ENCODE measurements at regions of chr12 and their contacts with region 1.

Region 1: GRCh38 chr12:45728630-45729232 is 775 bp upstream of the ARID2 start:
- DNase-seq: peak; percentile 98

Region 2: DNA sequence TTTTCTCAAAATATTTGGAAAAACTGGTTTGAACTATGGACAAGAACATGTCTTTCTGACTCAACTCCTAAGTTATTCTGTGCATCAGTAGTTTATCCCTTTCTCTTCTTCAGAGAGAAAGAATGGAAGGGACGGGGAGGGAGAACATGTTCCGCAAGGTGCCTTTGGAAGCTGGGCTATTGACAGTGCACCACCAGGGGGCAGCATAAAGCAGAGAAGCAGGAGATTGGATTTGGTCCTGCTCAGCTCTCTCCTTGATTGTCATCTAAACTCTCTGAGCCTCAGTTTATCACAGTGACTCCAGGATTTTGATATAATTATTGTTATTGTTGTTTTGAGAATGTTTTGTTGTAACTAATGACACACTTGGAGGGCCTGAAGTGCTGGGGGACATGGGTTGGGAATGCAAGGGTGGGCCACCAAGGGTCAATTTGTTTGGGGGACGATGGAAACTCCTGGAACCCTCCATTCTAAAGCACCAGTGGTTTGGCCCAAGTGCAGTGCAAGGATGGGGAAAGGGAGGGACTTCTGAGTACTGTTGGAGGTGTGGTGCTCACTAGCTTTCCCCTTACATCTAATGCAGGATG is 558.2 kb before region 1 on chr12:
- intact Hi-C with region 1: loop called (anchors 10 kb)
- DNase-seq: peak; percentile 79

Region 3: GRCh38 chr12:45215419-45216229 is 513.1 kb before region 1 on chr12 and contains the start of gene ANO6:
- intact Hi-C with region 1: loop called (anchors 5 kb)
- DNase-seq: peak; percentile 96
- total RNA-seq, gene ANO6: 49.0 TPM

Region 4: GRCh38 chr12:45409966-45410365 is 318.8 kb before region 1 on chr12:
- intact Hi-C with region 1: loop called (anchors 10 kb)
- DNase-seq: no peak

Region 5: GRCh38 chr12:45543906-45544315 is 184.8 kb before region 1 on chr12:
- intact Hi-C with region 1: loop called (anchors 10 kb)
- DNase-seq: no peak

Region 6: DNA sequence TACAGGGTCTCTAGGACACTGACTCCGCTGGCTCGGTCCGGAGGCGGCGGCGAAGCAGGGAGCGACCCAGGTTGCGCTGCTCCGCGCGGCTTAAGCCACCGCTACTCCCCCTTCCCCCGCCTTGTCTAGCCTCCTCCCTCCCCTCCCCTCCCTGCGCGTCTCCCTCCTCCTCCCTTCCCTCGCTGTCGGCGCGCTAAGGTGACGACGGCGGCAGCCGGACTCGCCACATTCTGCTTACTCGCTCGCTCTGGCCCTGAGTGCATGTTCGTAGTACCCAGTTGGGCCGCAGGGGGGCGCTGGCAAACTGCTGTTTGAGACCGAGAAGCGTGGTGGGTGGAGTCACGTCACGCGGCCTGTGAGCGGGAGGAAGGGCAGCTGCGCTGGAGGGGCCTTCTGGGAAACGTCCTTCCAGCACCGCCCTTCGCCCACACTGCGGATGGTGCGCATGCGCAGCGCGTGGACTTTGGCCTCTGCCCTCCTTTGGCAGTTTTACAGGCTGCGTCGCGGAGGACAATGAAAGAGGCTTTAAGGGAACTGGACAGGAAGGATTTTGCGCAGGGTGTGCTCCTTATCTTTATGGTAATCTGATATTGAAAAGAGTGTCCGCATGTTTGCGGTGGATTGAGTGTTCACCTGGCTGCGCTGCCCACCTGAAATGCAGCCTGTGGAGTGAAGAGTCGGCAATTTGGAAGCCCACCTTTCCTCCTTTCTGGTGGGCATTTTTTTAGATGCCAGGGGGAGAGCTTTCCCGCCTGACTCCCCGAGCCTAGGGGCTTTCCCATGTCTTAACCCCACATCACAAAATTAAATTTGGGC is 261.9 kb after region 1 on chr12 and contains the start of gene SCAF11:
- intact Hi-C with region 1: loop called (anchors 2 kb)
- DNase-seq: peak; percentile 100
- total RNA-seq, gene SCAF11: 109 TPM

Measured in cardiac septum (tissue), 1 donor.